AG04450 (cell line): ENCODE measurements at regions of chr4 and their contacts with region 1.

Region 1: GRCh38 chr4:147866532-147867271 is 134.8 kb downstream of the ARHGAP10 start:
- DNase-seq: peak; percentile 85
- H3K4me3 ChIP-seq: no peak overlapping the region
- H3K27ac ChIP-seq: no peak overlapping the region
- H3K27me3 ChIP-seq: no peaks in the 10 kb centered on the region
- CTCF ChIP-seq: peak; percentile 99

Region 2: DNA sequence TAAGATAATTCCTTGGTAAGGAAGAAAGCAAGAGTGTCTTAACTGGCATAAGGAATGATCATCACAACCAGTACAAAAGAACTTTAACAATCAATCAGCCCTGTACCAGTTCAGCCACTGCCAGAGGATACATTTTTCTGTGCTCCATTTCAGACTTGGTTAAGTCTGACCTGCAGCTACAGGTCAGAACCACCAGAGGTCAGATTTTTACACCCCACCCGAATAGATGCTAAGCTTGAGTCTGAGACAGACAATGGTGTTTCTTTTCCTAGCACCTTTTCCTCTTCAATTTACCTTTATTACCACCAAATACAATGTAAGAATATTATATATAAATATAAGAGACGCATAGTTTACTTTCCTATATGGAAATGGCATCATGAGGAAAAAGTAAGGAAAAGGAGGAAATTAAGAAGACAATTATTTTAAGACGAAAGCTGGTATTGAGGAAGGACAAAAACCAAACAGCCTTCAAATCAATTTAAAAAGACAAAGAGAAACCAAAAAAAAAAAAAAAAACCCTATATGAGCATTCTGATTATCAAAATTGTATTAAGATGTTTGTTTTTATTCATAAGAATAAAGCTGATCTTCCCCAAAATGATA is 705.7 kb before region 1 on chr4:
- CTCF ChIA-PET with region 1: interaction called, 10 read pairs
- POLR2A ChIA-PET with region 1: no interaction called
- DNase-seq: peak; percentile 16
- H3K4me3 ChIP-seq: no peak overlapping the region
- H3K27ac ChIP-seq: no peak overlapping the region
- H3K27me3 ChIP-seq: no peaks in the 10 kb centered on the region
- CTCF ChIP-seq: peak; percentile 89

Region 3: GRCh38 chr4:147425019-147425418 is 441.7 kb before region 1 on chr4:
- CTCF ChIA-PET with region 1: no interaction called
- POLR2A ChIA-PET with region 1: no interaction called
- DNase-seq: no peak
- H3K4me3 ChIP-seq: no peak overlapping the region
- H3K27ac ChIP-seq: no peak overlapping the region
- H3K27me3 ChIP-seq: no peaks in the 10 kb centered on the region
- CTCF ChIP-seq: no peak

Region 4: GRCh38 chr4:147633113-147633512 is 233.6 kb before region 1 on chr4:
- CTCF ChIA-PET with region 1: interaction called, 82 read pairs
- POLR2A ChIA-PET with region 1: no interaction called
- DNase-seq: no peak
- H3K4me3 ChIP-seq: no peak overlapping the region
- H3K27ac ChIP-seq: no peak overlapping the region
- H3K27me3 ChIP-seq: no peaks in the 10 kb centered on the region
- CTCF ChIP-seq: no peak

Region 5: DNA sequence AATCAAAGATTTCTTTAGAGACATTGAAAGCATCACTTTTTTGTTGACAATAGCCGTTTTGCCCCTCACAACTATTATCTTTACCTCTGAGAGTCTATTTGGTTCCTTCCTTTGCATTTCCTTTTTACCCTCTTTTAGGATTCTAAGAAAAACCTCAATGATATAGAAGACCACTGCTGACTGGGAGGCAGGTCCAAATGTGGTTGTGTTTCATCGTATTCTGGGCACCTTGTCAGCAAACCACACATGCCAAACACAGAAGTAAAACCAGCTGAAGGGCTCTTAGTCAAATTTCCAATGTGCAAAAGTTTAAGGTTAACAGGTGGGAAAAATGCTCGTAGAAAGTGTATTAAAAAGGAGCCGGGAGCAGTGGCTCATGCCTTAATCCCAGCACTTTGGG is 177.6 kb before region 1 on chr4:
- CTCF ChIA-PET with region 1: interaction called, 113 read pairs
- POLR2A ChIA-PET with region 1: interaction called, 3 read pairs
- DNase-seq: no peak
- H3K4me3 ChIP-seq: no peak overlapping the region
- H3K27ac ChIP-seq: no peak overlapping the region
- H3K27me3 ChIP-seq: peaks cover 4% of the 10 kb centered on the region
- CTCF ChIP-seq: no peak

Region 6: DNA sequence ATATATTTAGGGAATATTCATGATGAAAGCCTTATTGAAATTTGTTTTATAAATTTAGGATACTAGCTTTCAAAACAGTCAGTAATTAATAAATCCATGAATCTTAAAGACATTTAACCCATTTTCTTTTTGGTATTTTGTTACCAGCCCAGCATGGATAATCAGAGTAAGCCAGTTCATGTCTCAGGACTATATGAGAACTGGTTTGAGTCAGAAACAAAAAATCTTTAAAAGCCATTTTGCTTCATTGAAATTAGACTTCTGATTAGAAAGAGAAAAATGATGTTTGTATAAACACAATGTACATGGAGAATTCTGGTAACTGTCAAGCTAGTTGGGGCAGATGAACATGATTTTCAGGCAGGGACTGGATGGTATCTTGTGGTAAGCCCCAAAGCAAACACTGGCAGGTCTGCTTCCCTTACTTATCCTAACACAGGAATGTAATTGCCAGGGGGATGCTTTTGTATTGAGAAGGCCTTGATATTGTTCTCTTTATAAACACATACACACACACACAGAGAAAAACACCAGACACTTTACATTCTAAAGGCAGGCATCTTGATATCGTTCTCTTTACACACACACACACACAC is 125.4 kb before region 1 on chr4:
- CTCF ChIA-PET with region 1: interaction called, 51 read pairs
- POLR2A ChIA-PET with region 1: no interaction called
- DNase-seq: peak; percentile 43
- H3K4me3 ChIP-seq: no peak overlapping the region
- H3K27ac ChIP-seq: no peak overlapping the region
- H3K27me3 ChIP-seq: no peaks in the 10 kb centered on the region
- CTCF ChIP-seq: no peak

Region 7: GRCh38 chr4:147831551-147832177 is 35.0 kb before region 1 on chr4:
- CTCF ChIA-PET with region 1: interaction called, 68 read pairs
- POLR2A ChIA-PET with region 1: interaction called, 4 read pairs
- DNase-seq: no peak
- H3K4me3 ChIP-seq: no peak overlapping the region
- H3K27ac ChIP-seq: peak overlapping the region; percentile 85
- H3K27me3 ChIP-seq: no peaks in the 10 kb centered on the region
- CTCF ChIP-seq: no peak

Region 8: DNA sequence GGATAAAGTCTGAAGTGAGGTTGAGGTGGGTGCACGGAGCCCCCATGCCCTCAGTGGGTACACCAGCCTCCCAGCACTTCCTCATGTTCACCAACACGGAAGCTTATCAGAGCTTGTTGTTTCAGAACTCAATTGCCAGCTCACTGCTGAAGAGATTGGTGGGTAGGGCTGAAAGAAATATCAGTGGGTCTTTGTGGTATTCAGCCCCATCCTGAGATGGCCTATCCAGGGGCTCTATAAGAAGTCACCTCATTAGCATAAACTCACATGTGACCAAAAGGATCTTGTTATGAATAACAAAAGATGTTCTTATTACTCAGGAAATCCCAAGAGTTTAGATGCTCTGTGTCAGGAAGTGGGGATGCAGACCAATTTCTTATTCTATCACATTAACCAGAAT is 42.5 kb after region 1 on chr4:
- CTCF ChIA-PET with region 1: interaction called, 12 read pairs
- POLR2A ChIA-PET with region 1: no interaction called
- DNase-seq: no peak
- H3K4me3 ChIP-seq: no peak overlapping the region
- H3K27ac ChIP-seq: no peak overlapping the region
- H3K27me3 ChIP-seq: no peaks in the 10 kb centered on the region
- CTCF ChIP-seq: no peak

Region 9: GRCh38 chr4:148214529-148215166 is 347.9 kb after region 1 on chr4:
- CTCF ChIA-PET with region 1: no interaction called
- POLR2A ChIA-PET with region 1: no interaction called
- DNase-seq: no peak
- H3K4me3 ChIP-seq: no peak overlapping the region
- H3K27ac ChIP-seq: no peak overlapping the region
- H3K27me3 ChIP-seq: no peaks in the 10 kb centered on the region
- CTCF ChIP-seq: no peak